Left ventricle myocardium superior (tissue), 1 donor: ENCODE measurements at regions of chr4 and their contacts with region 1.

Region 1: DNA sequence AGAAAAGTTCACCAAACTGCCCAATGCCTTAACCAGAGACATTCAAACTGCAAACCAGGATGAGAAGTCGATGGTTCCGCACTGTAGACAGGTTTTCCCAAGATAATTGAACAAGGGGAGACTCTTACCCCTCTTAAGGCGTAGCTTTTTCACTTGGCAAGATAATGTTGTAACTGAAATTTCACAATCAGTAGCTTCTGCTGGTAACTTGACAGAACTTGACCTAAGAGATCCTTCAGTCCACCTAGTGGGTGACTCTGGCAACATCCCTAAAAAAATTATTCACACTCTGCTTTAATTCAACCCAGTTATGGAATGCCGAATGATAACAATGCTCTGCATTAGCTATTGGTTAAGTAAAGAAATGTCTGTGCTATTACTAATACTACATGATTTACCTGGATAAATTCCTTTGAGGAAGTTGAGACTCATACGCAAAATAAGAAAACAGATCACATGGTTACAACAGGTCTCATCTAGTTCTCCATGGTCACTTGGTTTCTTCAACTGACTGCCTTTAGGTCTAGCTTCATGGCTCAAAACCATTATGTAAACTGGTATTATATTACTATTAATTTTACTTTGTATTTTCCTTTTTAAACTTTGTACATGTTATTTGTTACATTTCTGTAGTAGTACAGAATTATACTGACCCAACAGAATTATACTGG is 9.1 kb downstream of the ELF2 start:
- DNase-seq: no peak
- ATAC-seq: peak; percentile 64

Region 2: GRCh38 chr4:139099366-139099982 is 68.4 kb before region 1 on chr4:
- intact Hi-C with region 1: loop called (anchors 5 kb)
- DNase-seq: no peak
- ATAC-seq: peak; percentile 75